PC-9 (cell line): ENCODE measurements at regions of chr7 and their contacts with region 1.

Region 1: GRCh38 chr7:112063974-112064373 is 142.2 kb downstream of the DOCK4 start:
- DNase-seq: no peak
- H3K4me3 ChIP-seq: no peak overlapping the region
- H3K27ac ChIP-seq: no peak overlapping the region
- H3K4me1 ChIP-seq: no peaks in the 10 kb centered on the region
- H3K27me3 ChIP-seq: no peaks in the 10 kb centered on the region
- CTCF ChIP-seq: no peak

Region 2: DNA sequence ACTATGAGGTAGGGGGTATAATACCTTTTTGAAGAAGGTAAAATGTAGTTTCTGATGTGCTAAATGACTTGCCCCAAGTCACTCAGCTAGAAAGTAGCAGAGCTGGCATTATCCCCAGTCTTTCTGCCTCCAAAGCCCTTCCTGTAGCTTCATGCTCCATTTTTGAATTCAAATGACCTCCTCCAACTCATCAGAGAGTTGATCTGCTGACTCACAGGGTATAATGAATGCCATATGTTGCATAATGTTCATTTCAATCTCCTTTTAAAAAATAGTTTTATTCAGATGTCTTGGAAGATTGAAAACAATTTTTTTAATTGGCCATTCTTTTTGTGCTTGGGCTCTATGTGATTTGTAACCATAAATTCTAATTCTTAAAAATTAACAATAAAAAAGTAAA is 228.9 kb before region 1 on chr7:
- CTCF ChIA-PET with region 1: no interaction called
- POLR2A ChIA-PET with region 1: no interaction called
- intact Hi-C with region 1: no loop called
- DNase-seq: no peak
- H3K4me3 ChIP-seq: no peak overlapping the region
- H3K27ac ChIP-seq: no peak overlapping the region
- H3K4me1 ChIP-seq: no peaks in the 10 kb centered on the region
- H3K27me3 ChIP-seq: no peaks in the 10 kb centered on the region
- CTCF ChIP-seq: no peak

Region 3: GRCh38 chr7:112298543-112299100 is 234.6 kb after region 1 on chr7:
- CTCF ChIA-PET with region 1: no interaction called
- POLR2A ChIA-PET with region 1: interaction called, 11 read pairs
- intact Hi-C with region 1: no loop called
- DNase-seq: no peak
- H3K4me3 ChIP-seq: no peak overlapping the region
- H3K27ac ChIP-seq: no peak overlapping the region
- H3K4me1 ChIP-seq: no peaks in the 10 kb centered on the region
- H3K27me3 ChIP-seq: no peaks in the 10 kb centered on the region
- CTCF ChIP-seq: no peak